ENCODE measurements at regions of chr15 and their contacts with region 1.

Region 1: GRCh38 chr15:90463381-90463780 is 66.3 kb upstream of the CRTC3 start:
- DNase-seq: no peak
- ATAC-seq: no peak
- H3K4me3 Mint-ChIP-seq: no peak overlapping the region
- H3K27ac Mint-ChIP-seq: peak overlapping the region; percentile 37
- H3K4me1 Mint-ChIP-seq: peaks cover 2% of the 10 kb centered on the region
- H3K27me3 Mint-ChIP-seq: no peaks in the 10 kb centered on the region

Region 2: GRCh38 chr15:90400406-90401314 is 62.7 kb before region 1 on chr15:
- CTCF ChIA-PET with region 1: no interaction called
- POLR2A ChIA-PET with region 1: no interaction called
- DNase-seq: peak; percentile 84
- ATAC-seq: peak; percentile 96
- H3K4me3 Mint-ChIP-seq: peak overlapping the region; percentile 68
- H3K27ac Mint-ChIP-seq: peak overlapping the region; percentile 93
- H3K4me1 Mint-ChIP-seq: peaks cover 60% of the 10 kb centered on the region
- H3K27me3 Mint-ChIP-seq: no peaks in the 10 kb centered on the region

Region 3: DNA sequence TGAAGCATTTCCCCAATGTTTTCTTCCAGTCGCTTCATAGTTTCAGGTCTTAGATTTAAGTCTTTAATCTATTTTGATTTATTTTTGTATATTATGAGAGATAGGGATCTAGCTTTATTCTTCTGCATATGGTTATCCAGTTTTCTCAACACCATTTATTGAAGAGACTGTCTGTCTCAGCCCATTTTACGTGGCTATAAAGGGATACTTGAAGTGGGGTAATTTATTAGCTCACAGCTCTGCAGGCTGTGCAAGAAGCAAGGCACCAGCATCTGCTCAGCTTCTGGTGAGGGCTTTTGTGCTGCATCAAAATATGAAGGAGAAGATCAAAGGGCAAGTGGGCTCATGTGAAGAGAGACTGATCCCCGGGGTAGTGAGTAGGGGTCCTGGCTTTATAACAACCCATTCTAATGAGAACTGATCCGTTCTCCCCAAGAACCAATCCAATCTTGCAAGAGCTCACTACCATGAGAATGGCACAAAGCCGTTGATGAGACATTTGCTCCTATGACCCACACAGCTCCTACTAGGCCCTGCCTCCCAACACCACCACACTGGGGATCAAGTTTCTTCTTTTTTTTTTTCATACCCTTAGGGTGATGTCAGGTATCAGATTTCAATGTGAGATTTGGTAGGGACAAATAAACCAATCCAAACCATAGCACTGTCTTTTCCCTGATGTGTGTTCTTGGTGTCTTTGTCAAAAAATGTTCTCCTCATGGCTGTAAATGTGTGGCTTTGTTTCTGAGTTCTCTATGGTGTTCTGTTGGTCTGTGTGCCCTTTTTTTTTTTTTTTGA is 12.1 kb before region 1 on chr15:
- CTCF ChIA-PET with region 1: interaction called, 10 read pairs
- POLR2A ChIA-PET with region 1: no interaction called
- DNase-seq: no peak
- ATAC-seq: no peak
- H3K4me3 Mint-ChIP-seq: no peak overlapping the region
- H3K27ac Mint-ChIP-seq: no peak overlapping the region
- H3K4me1 Mint-ChIP-seq: peaks cover 11% of the 10 kb centered on the region
- H3K27me3 Mint-ChIP-seq: no peaks in the 10 kb centered on the region

Region 4: GRCh38 chr15:90529371-90530249 is 66.2 kb after region 1 on chr15 and contains the start of gene CRTC3:
- CTCF ChIA-PET with region 1: no interaction called
- POLR2A ChIA-PET with region 1: no interaction called
- DNase-seq: peak; percentile 62
- ATAC-seq: peak; percentile 89
- H3K4me3 Mint-ChIP-seq: peak within 1 kb of the TSS; percentile 88
- H3K27ac Mint-ChIP-seq: peak within 1 kb of the TSS; percentile 88
- H3K4me1 Mint-ChIP-seq: peaks cover 40% of the 10 kb centered on the region
- H3K27me3 Mint-ChIP-seq: no peaks in the 10 kb centered on the region
- total RNA-seq, gene CRTC3: 64.9 to 66.6 TPM

Measured in activated CD8-positive, alpha-beta T cell treated with anti-CD3 and anti-CD28 coated beads, Interleukin-2, amount 10 ng/mL, durations not matched to agents 7 days and 5 days (primary cell).